Activated T-helper 2 cell treated with anti-CD3 and anti-CD28 coated beads, Interferon-gamma antibody, Interleukin-2, Interleukin-4, amounts not matched to agents 10 μg/mL and 5 μg/mL and 100 μg/mL, durations not matched to agents 14 hours and 24 hours and 36 hours (primary cell): ENCODE measurements at regions of chr1 and their contacts with region 1.

Region 1: GRCh38 chr1:53889304-53890298 is at the start of gene YIPF1:
- DNase-seq: peak; percentile 85
- H3K4me3 Mint-ChIP-seq: peak within 1 kb of the TSS; percentile 99
- H3K27ac Mint-ChIP-seq: peak within 1 kb of the TSS; percentile 95
- H3K4me1 Mint-ChIP-seq: peaks cover 19% of the 10 kb centered on the region
- H3K27me3 Mint-ChIP-seq: no peaks in the 10 kb centered on the region
- total RNA-seq, gene YIPF1: 14.8 and 15.6 TPM in 2 replicates

Region 2: DNA sequence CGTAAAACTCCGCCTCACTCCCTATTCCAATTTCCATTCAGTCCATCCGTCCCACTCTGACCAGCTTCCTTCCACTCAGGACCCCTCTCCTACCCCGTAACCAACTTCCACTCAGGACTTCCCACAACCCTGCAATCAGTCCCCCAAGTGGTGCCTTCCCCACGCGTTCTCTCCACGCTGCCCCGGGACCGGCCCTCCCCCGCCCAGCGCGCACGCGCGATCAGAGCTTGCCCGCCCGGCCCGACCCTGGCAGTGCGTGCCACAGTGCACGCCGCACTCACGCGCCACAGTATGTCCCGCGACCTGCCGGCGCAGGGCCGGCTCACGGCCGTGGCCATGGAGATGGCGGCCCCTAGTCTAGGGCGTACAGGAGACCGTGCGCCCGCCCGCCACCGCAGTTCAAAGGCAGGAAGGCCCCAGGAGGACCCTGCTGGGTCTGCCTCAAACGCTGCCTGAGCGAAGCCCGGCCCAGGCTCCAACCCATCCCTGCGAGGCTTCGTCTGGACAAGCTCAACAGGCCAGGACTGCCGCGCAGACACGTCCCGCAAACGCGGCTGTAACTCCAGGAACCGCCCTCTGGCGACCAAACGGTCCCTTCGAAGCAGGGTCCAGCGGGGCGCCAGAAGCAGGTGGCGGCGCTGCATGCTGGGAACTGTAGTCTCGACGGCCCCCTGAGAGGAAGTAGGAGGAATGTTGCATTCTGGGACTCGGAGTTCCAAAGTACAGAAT is 51.5 kb before region 1 on chr1 and contains the start of gene NDC1:
- intact Hi-C with region 1: loop called (anchors 1 kb)
- DNase-seq: peak; percentile 87
- H3K4me3 Mint-ChIP-seq: peak within 1 kb of the TSS; percentile 98
- H3K27ac Mint-ChIP-seq: peak within 1 kb of the TSS; percentile 94
- H3K4me1 Mint-ChIP-seq: peaks cover 22% of the 10 kb centered on the region
- H3K27me3 Mint-ChIP-seq: no peaks in the 10 kb centered on the region
- total RNA-seq, gene NDC1: 32.4 and 33.9 TPM in 2 replicates

Region 3: GRCh38 chr1:53878492-53879105 is 11.0 kb before region 1 on chr1:
- intact Hi-C with region 1: no loop called
- DNase-seq: no peak
- H3K4me3 Mint-ChIP-seq: no peak overlapping the region
- H3K27ac Mint-ChIP-seq: no peak overlapping the region
- H3K4me1 Mint-ChIP-seq: peaks cover 6% of the 10 kb centered on the region
- H3K27me3 Mint-ChIP-seq: no peaks in the 10 kb centered on the region